PC-3 (cell line): ENCODE measurements at regions of chr16 and their contacts with region 1.

Region 1: DNA sequence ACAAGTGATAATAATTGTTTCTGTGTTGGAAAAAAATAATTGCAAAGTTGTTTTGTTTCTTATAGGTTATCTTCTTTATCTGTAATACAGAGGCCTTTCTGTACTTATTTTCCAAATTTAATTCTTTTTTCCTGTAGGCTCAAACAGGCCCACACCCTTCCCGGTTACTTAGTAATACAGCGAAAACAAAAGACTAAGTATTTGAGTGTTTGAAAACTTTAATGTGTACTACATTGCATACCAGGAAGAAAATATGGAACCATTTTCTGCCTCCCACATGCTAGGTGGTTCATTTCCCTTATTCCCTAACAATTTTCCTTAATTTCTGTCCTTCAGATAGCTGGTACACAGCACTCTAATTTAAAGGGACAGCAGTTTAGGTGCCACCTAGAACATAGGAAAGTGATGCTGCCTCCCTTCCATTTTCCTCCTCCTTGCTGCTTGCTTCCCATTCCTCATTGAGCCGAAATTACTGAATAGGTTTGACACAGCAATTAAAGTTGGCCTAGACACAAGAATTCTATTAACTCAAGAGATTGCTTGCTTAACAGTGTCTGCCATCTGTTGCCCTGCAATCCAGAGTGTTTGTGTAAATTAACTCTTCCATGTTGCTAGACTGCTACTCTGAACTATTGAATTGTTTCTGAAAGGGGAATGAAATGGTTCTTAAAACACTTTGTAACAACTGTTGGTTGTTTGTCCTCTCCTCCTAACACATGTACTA is 24.2 kb downstream of the CYB5B start:
- DNase-seq: no peak
- ATAC-seq: no peak
- H3K4me3 ChIP-seq: no peak overlapping the region
- H3K27ac ChIP-seq: no peak overlapping the region
- H3K4me1 ChIP-seq: peaks cover 16% of the 10 kb centered on the region
- H3K27me3 ChIP-seq: no peaks in the 10 kb centered on the region
- CTCF ChIP-seq: no peak

Region 2: GRCh38 chr16:69410285-69410990 is 38.2 kb before region 1 on chr16:
- CTCF ChIA-PET with region 1: no interaction called
- POLR2A ChIA-PET with region 1: no interaction called
- intact Hi-C with region 1: no loop called
- DNase-seq: peak; percentile 78
- ATAC-seq: peak; percentile 78
- H3K4me3 ChIP-seq: no peak overlapping the region
- H3K27ac ChIP-seq: peak overlapping the region; percentile 82
- H3K4me1 ChIP-seq: peaks cover 18% of the 10 kb centered on the region
- H3K27me3 ChIP-seq: no peaks in the 10 kb centered on the region
- CTCF ChIP-seq: no peak

Region 3: DNA sequence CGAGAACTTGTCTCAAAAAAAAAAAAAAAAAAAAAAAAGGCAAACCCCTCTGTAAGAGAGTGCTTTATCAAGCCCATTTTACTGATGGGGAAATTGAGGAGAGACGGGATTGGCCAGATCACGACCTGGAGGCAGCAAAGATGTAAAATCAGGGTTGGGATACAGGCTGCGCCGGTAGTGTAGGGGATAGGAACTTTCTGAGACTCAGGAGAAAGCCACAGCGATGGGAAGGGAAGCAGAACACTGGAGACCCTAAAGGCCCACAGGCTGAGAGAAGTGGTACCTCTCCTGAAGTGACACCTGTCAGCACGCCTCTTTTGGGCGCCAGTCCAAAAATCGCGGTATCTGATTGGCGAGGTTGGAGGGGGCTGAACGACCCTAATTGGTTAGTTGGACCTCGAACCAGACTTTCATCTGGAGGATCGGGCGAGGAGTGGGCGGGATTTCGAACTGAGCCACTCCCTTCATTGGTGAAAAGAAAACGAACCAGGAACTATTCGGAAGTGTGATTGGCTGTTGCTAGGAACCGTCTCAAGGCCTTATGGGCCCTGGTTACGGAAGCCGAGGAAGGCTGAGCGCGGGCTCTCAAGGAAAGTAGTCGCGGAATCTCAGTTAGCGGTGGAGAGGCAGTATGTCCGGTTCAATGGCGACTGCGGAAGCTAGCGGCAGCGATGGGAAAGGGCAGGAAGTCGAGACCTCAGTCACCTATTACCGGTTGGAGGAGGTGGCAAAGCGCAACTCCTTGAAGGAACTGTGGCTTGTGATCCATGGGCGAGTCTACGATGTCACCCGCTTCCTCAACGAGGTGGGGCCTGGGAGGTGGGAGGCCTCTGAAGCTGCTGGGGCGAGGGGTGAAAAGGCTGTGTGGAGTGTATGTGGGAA is 24.3 kb before region 1 on chr16 and contains the start of gene CYB5B:
- CTCF ChIA-PET with region 1: no interaction called
- POLR2A ChIA-PET with region 1: no interaction called
- intact Hi-C with region 1: loop called (anchors 2 kb)
- DNase-seq: peak; percentile 96
- ATAC-seq: peak; percentile 97
- H3K4me3 ChIP-seq: peak within 1 kb of the TSS; percentile 99
- H3K27ac ChIP-seq: peak within 1 kb of the TSS; percentile 56
- H3K4me1 ChIP-seq: peaks cover 3% of the 10 kb centered on the region; the same call in 1 of the 2 replicates
- H3K27me3 ChIP-seq: no peaks in the 10 kb centered on the region
- CTCF ChIP-seq: no peak
- total RNA-seq, gene CYB5B: 64.5 and 77.1 TPM in 2 replicates

Region 4: GRCh38 chr16:69535123-69536050 is 86.8 kb after region 1 on chr16:
- CTCF ChIA-PET with region 1: no interaction called
- POLR2A ChIA-PET with region 1: no interaction called
- intact Hi-C with region 1: no loop called
- DNase-seq: no peak
- ATAC-seq: no peak
- H3K4me3 ChIP-seq: no peak overlapping the region
- H3K27ac ChIP-seq: no peak overlapping the region
- H3K4me1 ChIP-seq: peaks cover 8% of the 10 kb centered on the region
- H3K27me3 ChIP-seq: no peaks in the 10 kb centered on the region
- CTCF ChIP-seq: no peak